ENCODE measurements at regions of chr5 and their contacts with region 1.

Region 1: DNA sequence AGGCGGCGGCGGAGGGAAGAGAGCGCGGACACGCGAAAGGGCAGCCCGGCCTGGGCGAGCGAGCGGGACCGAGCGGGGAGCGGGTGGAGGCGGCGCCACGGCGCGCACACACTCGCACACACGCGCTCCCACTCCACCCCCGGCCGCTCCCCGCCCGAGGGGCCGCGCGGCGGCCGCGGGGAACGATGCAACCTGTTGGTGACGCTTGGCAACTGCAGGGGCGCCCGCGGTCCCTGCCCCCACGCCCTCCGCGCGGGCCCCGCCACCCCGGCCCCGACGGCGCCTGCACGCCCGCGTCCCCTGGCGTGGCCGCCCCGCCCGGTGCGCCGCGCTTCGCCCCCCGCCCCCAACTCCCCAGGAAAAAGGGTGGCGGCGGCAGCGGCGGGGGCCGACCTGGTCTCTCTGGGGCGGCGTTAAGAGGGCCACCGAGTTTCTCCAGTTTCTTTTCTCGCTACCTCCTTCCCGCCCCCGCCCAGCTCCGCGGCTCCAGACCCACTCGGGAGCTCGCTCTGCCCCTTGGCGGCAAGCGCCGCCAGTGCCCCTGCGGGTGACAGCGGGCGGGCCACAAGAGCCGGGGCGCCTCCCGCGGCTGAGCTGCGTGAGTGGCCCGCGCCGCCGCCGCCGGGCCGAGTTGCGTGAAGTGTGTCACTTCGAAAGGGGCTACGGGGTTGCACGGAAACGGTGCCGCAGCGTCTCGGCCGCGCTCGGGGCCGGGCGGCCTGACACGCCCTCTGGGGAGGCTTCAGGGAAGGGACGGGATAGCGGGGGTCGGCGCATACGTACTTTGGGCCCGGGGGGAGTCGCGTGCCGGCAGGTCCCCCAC is at the start of gene NR3C1:
- DNase-seq: peak; percentile 89 to 92 (median 91)
- H3K4me3 ChIP-seq: peak within 1 kb of the TSS; percentile 77 to 93
- H3K4me3 Mint-ChIP-seq: peak within 1 kb of the TSS; percentile 92 to 97 (median 94)
- H3K27ac ChIP-seq: peak within 1 kb of the TSS; percentile 90
- H3K27ac Mint-ChIP-seq: peak within 1 kb of the TSS; percentile 95 to 100 (median 99)
- H3K4me1 ChIP-seq: peaks cover 39% of the 10 kb centered on the region
- H3K4me1 Mint-ChIP-seq: peaks cover 32 to 50% (median 40%) of the 10 kb centered on the region in 4 donors
- H3K27me3 ChIP-seq: no peaks in the 10 kb centered on the region
- H3K27me3 Mint-ChIP-seq: no peaks in the 10 kb centered on the region
- total RNA-seq, gene NR3C1: 161 to 164 TPM

Region 2: GRCh38 chr5:142922223-142922952 is 481.4 kb before region 1 on chr5:
- CTCF ChIA-PET with region 1: interaction called, 12 read pairs
- POLR2A ChIA-PET with region 1: interaction called, 9 read pairs
- intact Hi-C with region 1: loop called (anchors 1 kb)
- DNase-seq: peak in 4 of 5 donors; percentile 9 to 32 (median 20)
- H3K4me3 ChIP-seq: no peak overlapping the region
- H3K4me3 Mint-ChIP-seq: no peak overlapping the region
- H3K27ac ChIP-seq: no peak overlapping the region
- H3K27ac Mint-ChIP-seq: peak overlapping the region in 4 of 7 donors; percentile 19 to 60 (median 27)
- H3K4me1 ChIP-seq: peaks cover 10% of the 10 kb centered on the region
- H3K4me1 Mint-ChIP-seq: peaks cover 19 to 34% (median 28%) of the 10 kb centered on the region in 4 donors
- H3K27me3 ChIP-seq: no peaks in the 10 kb centered on the region
- H3K27me3 Mint-ChIP-seq: no peaks in the 10 kb centered on the region

Region 3: GRCh38 chr5:143030349-143030748 is 373.5 kb before region 1 on chr5:
- CTCF ChIA-PET with region 1: interaction called, 7 read pairs
- POLR2A ChIA-PET with region 1: interaction called, 5 read pairs
- intact Hi-C with region 1: loop called (anchors 1 kb)
- DNase-seq: peak in 4 of 5 donors; percentile 31 to 46 (median 42)
- H3K4me3 ChIP-seq: no peak overlapping the region
- H3K4me3 Mint-ChIP-seq: peak overlapping the region in 7 of 8 donors; percentile 33 to 64 (median 50)
- H3K27ac ChIP-seq: no peak overlapping the region
- H3K27ac Mint-ChIP-seq: peak overlapping the region; percentile 5 to 81 (median 58)
- H3K4me1 ChIP-seq: peaks cover 23% of the 10 kb centered on the region
- H3K4me1 Mint-ChIP-seq: peaks cover 20 to 57% (median 27%) of the 10 kb centered on the region in 4 donors
- H3K27me3 ChIP-seq: no peaks in the 10 kb centered on the region
- H3K27me3 Mint-ChIP-seq: no peaks in the 10 kb centered on the region

Region 4: DNA sequence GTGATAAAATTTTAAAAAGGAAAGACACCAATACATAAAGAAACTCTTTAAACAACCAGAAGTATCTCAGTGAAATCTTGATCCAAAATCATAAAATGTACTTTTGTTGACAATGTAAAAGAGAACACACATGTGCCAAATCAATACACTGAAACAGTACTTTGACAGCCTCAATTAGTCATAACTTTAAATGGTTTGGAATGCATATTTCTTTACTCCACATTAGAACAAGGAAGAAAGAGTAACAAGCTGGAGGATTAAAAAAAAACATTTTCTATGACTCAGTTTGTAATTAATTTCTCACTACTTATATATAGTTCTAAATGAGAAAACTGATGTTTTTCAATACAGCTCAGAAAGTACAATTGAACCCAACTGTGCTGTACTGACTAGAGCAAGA is 101.5 kb before region 1 on chr5:
- CTCF ChIA-PET with region 1: no interaction called
- POLR2A ChIA-PET with region 1: interaction called, 8 read pairs
- intact Hi-C with region 1: loop called (anchors 5 kb)
- DNase-seq: no peak
- H3K4me3 ChIP-seq: no peak overlapping the region
- H3K4me3 Mint-ChIP-seq: no peak overlapping the region
- H3K27ac ChIP-seq: no peak overlapping the region
- H3K27ac Mint-ChIP-seq: peak overlapping the region in 2 of 7 donors; percentile 7
- H3K4me1 ChIP-seq: no peaks in the 10 kb centered on the region
- H3K4me1 Mint-ChIP-seq: peaks cover 25 to 34% (median 31%) of the 10 kb centered on the region in 4 donors
- H3K27me3 ChIP-seq: no peaks in the 10 kb centered on the region
- H3K27me3 Mint-ChIP-seq: no peaks in the 10 kb centered on the region

Region 5: GRCh38 chr5:143413958-143414669 is 10.3 kb after region 1 on chr5:
- CTCF ChIA-PET with region 1: interaction called, 14 read pairs
- POLR2A ChIA-PET with region 1: interaction called, 62 read pairs
- intact Hi-C with region 1: no loop called
- DNase-seq: peak in 1 of 5 donors; percentile 44
- H3K4me3 ChIP-seq: no peak overlapping the region
- H3K4me3 Mint-ChIP-seq: peak overlapping the region; percentile 28 to 73 (median 63)
- H3K27ac ChIP-seq: peak overlapping the region; percentile 33
- H3K27ac Mint-ChIP-seq: peak overlapping the region; percentile 4 to 92 (median 72)
- H3K4me1 ChIP-seq: peaks cover 87% of the 10 kb centered on the region
- H3K4me1 Mint-ChIP-seq: peaks cover 30 to 64% (median 48%) of the 10 kb centered on the region in 4 donors
- H3K27me3 ChIP-seq: no peaks in the 10 kb centered on the region
- H3K27me3 Mint-ChIP-seq: no peaks in the 10 kb centered on the region

Region 6: GRCh38 chr5:143440448-143441115 is 36.8 kb after region 1 on chr5:
- CTCF ChIA-PET with region 1: interaction called, 64 read pairs
- POLR2A ChIA-PET with region 1: interaction called, 250 read pairs
- intact Hi-C with region 1: loop called (anchors 1 kb)
- DNase-seq: no peak
- H3K4me3 ChIP-seq: no peak overlapping the region
- H3K4me3 Mint-ChIP-seq: no peak overlapping the region
- H3K27ac ChIP-seq: no peak overlapping the region
- H3K27ac Mint-ChIP-seq: peak overlapping the region in 1 of 7 donors; percentile 9
- H3K4me1 ChIP-seq: peaks cover 14% of the 10 kb centered on the region
- H3K4me1 Mint-ChIP-seq: peaks cover 20 to 25% (median 22%) of the 10 kb centered on the region in 4 donors
- H3K27me3 ChIP-seq: no peaks in the 10 kb centered on the region
- H3K27me3 Mint-ChIP-seq: no peaks in the 10 kb centered on the region

Region 7: DNA sequence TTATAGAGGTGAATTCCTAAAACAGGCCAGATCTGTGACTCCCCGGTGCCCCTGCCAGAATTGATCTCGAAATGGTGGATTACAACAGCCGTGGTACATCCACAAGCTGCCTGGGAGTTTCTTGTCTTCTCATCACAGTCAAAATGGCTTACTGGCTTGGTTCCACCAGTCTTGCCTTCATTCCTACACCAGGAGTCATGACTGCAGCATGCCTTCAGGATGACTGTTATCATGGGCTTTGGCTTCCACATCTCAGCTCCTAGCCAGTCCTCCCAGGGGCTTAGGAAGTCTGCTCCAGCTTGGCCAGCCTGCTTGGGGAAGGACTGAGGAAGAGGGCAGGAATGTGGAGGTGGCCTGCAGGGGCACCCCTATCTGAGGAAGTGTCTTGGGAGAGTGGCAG is 132.6 kb after region 1 on chr5:
- CTCF ChIA-PET with region 1: no interaction called
- POLR2A ChIA-PET with region 1: no interaction called
- intact Hi-C with region 1: no loop called
- DNase-seq: no peak
- H3K4me3 ChIP-seq: no peak overlapping the region
- H3K4me3 Mint-ChIP-seq: no peak overlapping the region
- H3K27ac ChIP-seq: no peak overlapping the region
- H3K27ac Mint-ChIP-seq: no peak overlapping the region
- H3K4me1 ChIP-seq: no peaks in the 10 kb centered on the region
- H3K4me1 Mint-ChIP-seq: no peaks in the 10 kb centered on the region
- H3K27me3 ChIP-seq: no peaks in the 10 kb centered on the region
- H3K27me3 Mint-ChIP-seq: no peaks in the 10 kb centered on the region

Region 8: DNA sequence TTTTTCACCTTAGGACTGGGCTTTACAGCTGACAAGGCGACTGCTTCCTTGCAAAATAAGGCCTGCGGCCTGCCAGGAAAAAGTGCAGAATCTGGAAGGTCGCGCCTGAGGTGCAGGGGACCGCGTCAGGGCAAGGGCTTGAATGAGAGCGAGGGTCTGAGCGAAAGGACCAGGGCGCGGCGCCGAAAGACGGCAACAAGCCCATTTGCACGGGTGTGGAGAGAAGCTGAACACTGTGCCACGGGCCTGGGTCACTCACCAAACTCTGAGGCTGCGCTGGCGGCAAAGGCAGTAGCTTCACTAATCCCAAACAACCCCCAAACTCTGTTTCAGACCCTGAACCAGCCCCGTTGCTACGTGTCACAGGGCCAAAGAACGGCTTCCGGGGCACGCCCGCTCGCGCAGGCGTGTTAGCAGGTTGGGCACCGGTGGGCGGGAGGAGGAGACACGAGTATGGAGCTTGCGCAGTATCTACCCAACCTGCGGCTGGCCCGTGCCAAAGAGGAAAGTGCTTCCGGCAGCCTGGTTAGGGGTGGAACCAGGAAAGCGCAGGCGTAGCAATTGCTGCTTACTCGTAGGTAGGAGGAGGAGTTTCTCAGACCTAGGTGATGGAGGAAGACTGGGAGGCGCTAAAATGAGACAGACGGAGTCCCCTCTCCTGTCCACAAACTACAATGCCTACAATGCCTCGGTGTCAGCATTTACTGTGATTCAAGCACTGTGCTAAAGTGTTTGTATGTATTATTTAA is 766.6 kb after region 1 on chr5 and contains the starts of genes KCTD16 and YIPF5:
- CTCF ChIA-PET with region 1: interaction called, 5 read pairs
- POLR2A ChIA-PET with region 1: interaction called, 22 read pairs
- intact Hi-C with region 1: loop called (anchors 1 kb)
- DNase-seq: peak; percentile 96 to 99 (median 98)
- H3K4me3 ChIP-seq: peak within 1 kb of the TSS; percentile 66 to 97
- H3K4me3 Mint-ChIP-seq: peak within 1 kb of the TSS; percentile 84 to 98 (median 93)
- H3K27ac ChIP-seq: peak within 1 kb of the TSS; percentile 92
- H3K27ac Mint-ChIP-seq: peak within 1 kb of the TSS; percentile 90 to 99 (median 94)
- H3K4me1 ChIP-seq: peaks cover 44% of the 10 kb centered on the region
- H3K4me1 Mint-ChIP-seq: peaks cover 27 to 50% (median 45%) of the 10 kb centered on the region in 4 donors
- H3K27me3 ChIP-seq: no peaks in the 10 kb centered on the region
- H3K27me3 Mint-ChIP-seq: no peaks in the 10 kb centered on the region
- total RNA-seq, gene KCTD16: 0.14 to 0.20 TPM
- total RNA-seq, gene YIPF5: 50.5 to 56.3 TPM